ENCODE measurements at regions of chr1 and their contacts with region 1.

Region 1: GRCh38 chr1:207828485-207829158 is 76.8 kb downstream of the CD46 start:
- DNase-seq: peak; percentile 78
- ATAC-seq: no peak
- H3K4me3 Mint-ChIP-seq: no peak overlapping the region
- H3K27ac Mint-ChIP-seq: peak overlapping the region; percentile 45
- H3K4me1 Mint-ChIP-seq: peaks cover 97% of the 10 kb centered on the region
- H3K27me3 Mint-ChIP-seq: no peaks in the 10 kb centered on the region

Region 2: DNA sequence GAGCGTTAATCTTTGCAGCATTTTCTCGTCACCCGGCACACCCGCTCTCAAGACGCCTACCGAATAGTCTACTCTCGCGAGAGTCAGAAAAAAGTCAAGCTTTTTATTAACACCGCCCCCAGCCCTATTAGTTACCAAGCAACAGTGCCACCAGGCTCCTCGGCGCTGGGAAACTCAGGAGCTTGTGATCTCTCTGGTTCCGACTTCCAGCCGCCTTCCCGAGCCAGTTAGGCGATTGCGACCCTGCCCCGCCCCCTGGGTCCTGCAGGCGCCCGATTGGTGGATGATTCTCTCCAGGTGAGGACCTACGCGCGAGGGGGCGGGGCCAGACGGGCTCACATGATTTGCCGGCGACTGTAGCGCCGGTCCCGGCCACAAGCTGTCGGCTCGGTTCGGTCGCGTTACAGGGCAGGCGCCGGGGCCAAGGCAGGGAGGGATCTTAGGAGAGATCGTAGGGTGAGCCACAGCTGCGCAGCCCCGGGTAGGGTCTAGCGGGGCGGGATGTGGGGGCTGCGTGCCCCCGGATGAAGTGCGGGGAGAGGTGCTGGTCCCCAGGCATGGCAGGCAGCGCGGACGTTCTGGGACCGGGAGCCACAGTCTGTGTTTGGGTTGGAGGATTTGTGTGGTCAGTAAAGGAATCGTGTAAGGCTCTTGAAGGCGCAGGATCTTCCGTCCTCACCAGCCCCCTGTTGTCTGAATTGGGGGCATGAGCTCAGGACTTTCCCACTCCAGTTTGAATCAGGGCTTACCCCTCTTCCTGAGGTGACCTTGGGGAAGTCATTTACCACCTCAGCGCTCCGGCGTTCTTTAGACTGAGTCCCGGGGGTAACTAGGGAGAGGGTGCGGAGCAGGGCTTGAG is 775.5 kb before region 1 on chr1 and contains the start of gene PFKFB2:
- CTCF ChIA-PET with region 1: no interaction called
- POLR2A ChIA-PET with region 1: no interaction called
- intact Hi-C with region 1: loop called in 1 of 2 experiments (anchors 2 kb)
- DNase-seq: peak; percentile 96
- ATAC-seq: peak; percentile 83
- H3K4me3 Mint-ChIP-seq: peak within 1 kb of the TSS; percentile 99
- H3K27ac Mint-ChIP-seq: peak within 1 kb of the TSS; percentile 89
- H3K4me1 Mint-ChIP-seq: peaks cover 39% of the 10 kb centered on the region
- H3K27me3 Mint-ChIP-seq: no peaks in the 10 kb centered on the region
- total RNA-seq, gene PFKFB2: 3.1 to 3.5 TPM

Region 3: GRCh38 chr1:207751790-207752455 is 76.7 kb before region 1 on chr1 and contains the start of gene CD46:
- CTCF ChIA-PET with region 1: no interaction called
- POLR2A ChIA-PET with region 1: no interaction called
- intact Hi-C with region 1: loop called (anchors 2 kb)
- DNase-seq: peak; percentile 97
- ATAC-seq: peak; percentile 97
- H3K4me3 Mint-ChIP-seq: peak within 1 kb of the TSS; percentile 99
- H3K27ac Mint-ChIP-seq: peak within 1 kb of the TSS; percentile 97
- H3K4me1 Mint-ChIP-seq: peaks cover 62% of the 10 kb centered on the region
- H3K27me3 Mint-ChIP-seq: no peaks in the 10 kb centered on the region
- total RNA-seq, gene CD46: 92.2 to 92.7 TPM

Region 4: DNA sequence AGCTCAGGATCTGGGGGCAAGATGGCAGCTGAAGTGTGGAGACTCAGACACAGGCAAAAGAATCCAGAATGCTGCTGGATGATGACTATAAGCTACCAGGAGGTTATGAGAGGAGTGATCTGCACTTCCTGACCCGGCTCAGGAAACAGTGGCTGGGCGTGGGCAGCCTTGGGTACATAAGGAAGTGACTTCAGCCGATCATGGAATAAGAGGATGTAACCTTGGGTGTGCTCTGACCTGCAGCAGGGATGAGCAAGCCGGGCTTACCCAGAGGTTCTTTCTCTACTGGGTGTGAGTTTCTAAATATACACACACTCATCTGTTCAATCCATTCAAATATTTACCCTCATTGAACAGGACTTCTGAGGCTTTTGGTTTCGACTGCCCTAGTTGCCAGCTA is 19.6 kb after region 1 on chr1:
- CTCF ChIA-PET with region 1: interaction called, 8 read pairs
- POLR2A ChIA-PET with region 1: interaction called, 4 read pairs
- intact Hi-C with region 1: loop called in 1 of 2 experiments (anchors 1 kb)
- DNase-seq: peak; percentile 82
- ATAC-seq: peak; percentile 96
- H3K4me3 Mint-ChIP-seq: no peak overlapping the region
- H3K27ac Mint-ChIP-seq: peak overlapping the region; percentile 87
- H3K4me1 Mint-ChIP-seq: peaks cover 74% of the 10 kb centered on the region
- H3K27me3 Mint-ChIP-seq: no peaks in the 10 kb centered on the region

Region 5: GRCh38 chr1:207885129-207886032 is 56.8 kb after region 1 on chr1:
- CTCF ChIA-PET with region 1: interaction called, 53 read pairs
- POLR2A ChIA-PET with region 1: interaction called, 4 read pairs
- intact Hi-C with region 1: loop called (anchors 1 kb)
- DNase-seq: peak; percentile 85
- ATAC-seq: peak; percentile 62
- H3K4me3 Mint-ChIP-seq: no peak overlapping the region
- H3K27ac Mint-ChIP-seq: peak overlapping the region; percentile 97
- H3K4me1 Mint-ChIP-seq: peaks cover 35% of the 10 kb centered on the region
- H3K27me3 Mint-ChIP-seq: peaks cover 2% of the 10 kb centered on the region

Region 6: GRCh38 chr1:208988811-208989222 is 1160.2 kb after region 1 on chr1:
- CTCF ChIA-PET with region 1: no interaction called
- POLR2A ChIA-PET with region 1: no interaction called
- intact Hi-C with region 1: loop called in 1 of 2 experiments (anchors 10 kb)
- DNase-seq: peak; percentile 15
- ATAC-seq: peak; percentile 89
- H3K4me3 Mint-ChIP-seq: peak overlapping the region; percentile 58
- H3K27ac Mint-ChIP-seq: peak overlapping the region; percentile 83
- H3K4me1 Mint-ChIP-seq: peaks cover 18% of the 10 kb centered on the region
- H3K27me3 Mint-ChIP-seq: no peaks in the 10 kb centered on the region